OCI-LY7 (cell line): ENCODE measurements at regions of chr16 and their contacts with region 1.

Region 1: DNA sequence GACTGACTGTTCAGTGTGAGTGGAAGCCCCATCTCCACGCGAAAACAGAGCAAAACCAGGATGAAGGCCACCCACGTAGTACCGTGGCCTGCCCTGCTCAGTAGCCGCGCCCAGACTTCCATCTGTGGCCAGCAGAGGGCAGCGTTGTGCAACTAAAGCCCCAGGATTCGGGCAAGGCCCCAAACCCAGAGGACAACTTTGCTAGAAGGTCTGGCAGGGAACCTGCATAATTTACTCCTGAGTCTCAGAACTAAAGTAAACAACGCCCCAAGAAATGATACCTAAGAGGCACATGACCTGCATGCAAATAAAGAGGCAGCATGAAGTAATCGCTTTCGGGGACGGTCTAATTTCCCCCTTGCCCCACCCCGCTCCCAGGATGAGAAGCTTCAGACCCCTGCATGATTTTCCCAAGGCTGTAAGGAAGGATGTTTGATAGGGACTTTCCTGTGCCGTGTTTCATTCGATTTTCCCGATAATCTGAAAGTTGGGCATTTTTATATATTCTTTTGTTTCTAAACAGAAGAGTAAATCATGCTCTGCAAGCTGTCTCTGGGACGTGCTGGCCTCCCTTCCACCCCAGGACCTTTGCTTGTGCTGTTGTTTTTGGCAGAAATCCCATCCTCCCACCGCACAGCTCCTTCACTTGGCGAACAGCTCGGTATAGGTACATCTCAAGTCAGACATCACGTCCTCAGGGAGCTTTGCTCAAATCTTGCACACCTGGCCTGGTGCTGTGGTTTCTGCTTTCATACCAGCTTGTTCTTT is 18.6 kb downstream of the HSBP1 start:
- DNase-seq: peak; percentile 74
- H3K4me3 ChIP-seq: no peak overlapping the region
- H3K27ac ChIP-seq: no peak overlapping the region
- H3K4me1 ChIP-seq: no peaks in the 10 kb centered on the region
- CTCF ChIP-seq: peak; percentile 95

Region 2: GRCh38 chr16:83878838-83879237 is 52.5 kb after region 1 on chr16:
- CTCF ChIA-PET with region 1: no interaction called
- POLR2A ChIA-PET with region 1: no interaction called
- intact Hi-C with region 1: loop called (anchors 1 kb)
- DNase-seq: peak; percentile 24
- H3K4me3 ChIP-seq: no peak overlapping the region
- H3K27ac ChIP-seq: no peak overlapping the region
- H3K4me1 ChIP-seq: no peaks in the 10 kb centered on the region
- CTCF ChIP-seq: peak; percentile 69

Region 3: GRCh38 chr16:83887081-83887480 is 60.8 kb after region 1 on chr16:
- CTCF ChIA-PET with region 1: interaction called, 4 read pairs
- POLR2A ChIA-PET with region 1: no interaction called
- intact Hi-C with region 1: loop called (anchors 2 kb)
- DNase-seq: peak; percentile 20
- H3K4me3 ChIP-seq: no peak overlapping the region
- H3K27ac ChIP-seq: no peak overlapping the region
- H3K4me1 ChIP-seq: no peaks in the 10 kb centered on the region
- CTCF ChIP-seq: peak; percentile 73

Region 4: GRCh38 chr16:84065536-84066132 is 239.3 kb after region 1 on chr16:
- CTCF ChIA-PET with region 1: no interaction called
- POLR2A ChIA-PET with region 1: no interaction called
- intact Hi-C with region 1: loop called (anchors 2 kb)
- DNase-seq: peak; percentile 59
- H3K4me3 ChIP-seq: no peak overlapping the region
- H3K27ac ChIP-seq: no peak overlapping the region
- H3K4me1 ChIP-seq: no peaks in the 10 kb centered on the region
- CTCF ChIP-seq: peak; percentile 82